GM10248 (cell line): ENCODE measurements at regions of chr1 and their contacts with region 1.

Region 1: DNA sequence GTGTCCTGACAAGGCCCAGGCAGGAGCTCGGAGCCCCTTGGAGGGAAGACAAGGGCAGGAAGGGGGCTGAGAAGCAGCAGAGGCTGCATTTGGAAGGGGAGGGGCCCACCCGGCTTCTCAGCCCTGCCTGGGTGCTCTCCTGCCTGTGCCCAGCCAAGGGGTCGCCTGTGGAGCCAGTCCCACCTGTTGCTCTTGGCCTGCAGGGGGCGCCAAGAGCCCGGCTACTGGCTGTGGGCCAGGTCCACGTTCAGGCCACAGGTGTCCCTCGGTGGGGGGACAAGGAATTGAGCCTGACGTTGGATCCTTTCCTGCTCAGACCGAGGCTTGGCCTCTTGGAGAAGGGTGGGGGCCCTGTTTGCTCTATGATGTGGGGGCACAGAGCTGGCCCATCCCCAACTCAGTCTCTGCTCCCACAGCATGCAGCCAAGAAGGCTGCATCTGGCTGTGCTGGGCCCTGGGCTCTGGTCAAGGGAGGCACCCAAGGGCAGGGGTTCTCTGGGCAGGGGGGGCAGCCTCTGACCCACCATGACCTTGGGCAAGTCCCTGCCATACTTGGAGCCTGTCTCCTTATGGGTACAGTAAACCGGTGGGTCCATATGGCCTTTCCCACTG is 10.9 kb downstream of the WNT4 start:
- DNase-seq: peak; percentile 86
- CTCF ChIP-seq: peak; percentile 91

Region 2: DNA sequence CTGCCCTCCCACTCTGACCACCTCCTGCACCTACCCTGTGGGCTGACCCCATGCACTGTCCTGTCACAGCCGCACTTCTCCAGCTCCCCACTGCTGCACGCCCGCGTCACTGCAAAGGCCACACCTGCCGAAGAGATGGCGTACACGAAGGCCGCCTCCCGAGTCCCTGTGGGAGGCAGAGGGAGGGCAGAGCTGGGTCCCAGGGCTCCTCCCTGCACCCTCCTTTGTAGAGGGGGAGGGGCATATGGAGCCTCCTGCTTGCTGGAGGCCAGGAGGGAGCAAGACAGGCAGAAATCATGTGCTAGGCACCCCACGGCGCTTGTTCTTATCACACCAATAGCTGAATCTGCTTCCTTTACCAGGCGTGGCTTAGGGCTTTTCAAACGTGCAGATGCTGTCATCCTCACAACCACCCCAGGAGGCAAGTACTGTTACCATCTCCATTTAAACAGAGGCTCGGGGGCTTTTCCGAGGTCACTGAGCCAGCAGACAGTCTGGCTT is 10.5 kb before region 1 on chr1:
- CTCF ChIA-PET with region 1: interaction called, 11 read pairs
- POLR2A ChIA-PET with region 1: no interaction called
- DNase-seq: no peak
- CTCF ChIP-seq: no peak

Region 3: GRCh38 chr1:22142315-22143064 is 10.5 kb after region 1 on chr1:
- CTCF ChIA-PET with region 1: interaction called, 18 read pairs
- POLR2A ChIA-PET with region 1: no interaction called
- DNase-seq: peak; percentile 48
- CTCF ChIP-seq: no peak

Region 4: DNA sequence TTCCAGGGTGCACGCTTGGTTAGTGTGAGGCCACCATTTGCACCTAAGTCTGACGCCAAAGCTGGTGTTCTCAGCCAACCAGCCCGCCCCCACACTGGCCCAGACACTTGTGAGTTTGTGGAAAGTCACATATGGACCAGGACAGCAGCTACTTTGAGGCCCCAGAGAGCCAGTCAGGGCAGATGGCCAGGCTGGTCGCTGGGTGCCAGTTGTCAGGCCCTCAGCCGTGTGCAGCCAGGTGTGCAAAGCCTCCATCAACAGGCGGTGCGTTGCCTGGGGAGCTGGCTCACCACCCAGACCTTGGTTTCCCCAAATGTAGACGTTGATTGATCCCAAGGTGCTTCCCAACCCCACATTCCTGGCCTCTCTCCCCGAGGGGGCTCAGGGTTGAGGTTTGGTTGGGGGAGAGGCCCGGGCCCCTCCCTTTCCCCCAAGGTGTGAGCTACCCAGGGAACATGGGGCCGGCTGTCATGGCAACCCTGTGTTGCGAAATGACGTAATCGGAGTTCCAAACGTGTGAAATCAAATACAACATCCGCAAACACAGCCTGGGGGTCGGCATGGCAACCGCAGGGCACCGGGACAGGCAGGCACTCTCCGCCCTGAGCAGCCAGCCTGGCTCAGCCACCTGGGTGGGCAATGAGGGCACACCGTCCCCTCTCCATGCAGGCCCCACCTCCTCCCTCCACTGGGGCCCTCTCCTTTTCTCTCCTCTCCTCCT is 53.1 kb after region 1 on chr1:
- CTCF ChIA-PET with region 1: no interaction called
- POLR2A ChIA-PET with region 1: no interaction called
- DNase-seq: no peak
- CTCF ChIP-seq: no peak

Region 5: DNA sequence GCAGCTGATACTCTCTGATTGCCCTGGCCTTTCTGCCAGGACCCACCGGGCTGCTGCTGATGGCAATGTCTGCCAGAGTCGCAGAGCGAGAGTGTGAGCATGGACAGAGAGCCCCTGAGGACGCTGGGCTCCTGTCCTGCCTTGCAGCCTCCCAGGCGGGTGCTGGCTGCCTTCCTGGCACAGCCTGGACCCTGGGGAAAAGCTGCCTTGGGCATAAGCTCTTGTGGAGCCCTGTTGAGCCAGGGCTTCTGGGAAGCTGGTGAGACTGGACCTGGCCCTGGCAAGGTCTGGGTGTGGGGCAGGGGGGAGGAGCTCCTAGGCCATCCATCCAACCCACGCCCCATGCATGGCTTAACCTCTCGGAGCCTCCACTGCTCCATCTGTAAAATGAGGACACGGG is 116.8 kb after region 1 on chr1:
- CTCF ChIA-PET with region 1: no interaction called
- POLR2A ChIA-PET with region 1: no interaction called
- DNase-seq: no peak
- CTCF ChIP-seq: no peak

Region 6: GRCh38 chr1:22317226-22317919 is 185.4 kb after region 1 on chr1:
- CTCF ChIA-PET with region 1: no interaction called
- POLR2A ChIA-PET with region 1: no interaction called
- DNase-seq: peak; percentile 63
- CTCF ChIP-seq: peak; percentile 43